Gastrocnemius medialis (tissue), 4 donors: ENCODE measurements at regions of chr16 and their contacts with region 1.

Region 1: DNA sequence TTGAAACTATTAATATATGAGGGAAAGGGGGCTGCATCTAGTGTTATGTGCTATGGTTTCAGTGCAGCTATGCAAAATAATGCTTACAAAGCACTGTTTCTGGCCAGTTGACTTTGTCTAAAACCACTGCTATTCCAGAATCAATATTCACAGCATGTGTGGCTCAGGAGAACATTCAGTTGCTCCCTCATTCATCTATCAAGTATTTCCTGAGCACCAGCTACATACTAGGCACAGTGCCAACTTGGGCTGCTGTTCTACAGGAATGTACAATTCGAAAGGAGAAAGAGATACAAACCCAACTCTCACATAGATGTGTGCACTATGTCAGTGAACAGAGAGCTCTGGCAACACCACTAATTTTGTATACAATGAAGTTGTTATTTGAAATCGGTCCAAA is 183.0 kb downstream of the PHKB start:
- DNase-seq: no peak
- ATAC-seq: no peak
- H3K4me3 ChIP-seq: no peak overlapping the region
- H3K27ac ChIP-seq: peak overlapping the region in 2 of 4 donors; percentile 20 to 42
- H3K4me1 ChIP-seq: peaks cover 13% of the 10 kb centered on the region in 2 donors
- H3K27me3 ChIP-seq: no peaks in the 10 kb centered on the region
- CTCF ChIP-seq: no peak
- POLR2A ChIP-seq: no peak

Region 2: DNA sequence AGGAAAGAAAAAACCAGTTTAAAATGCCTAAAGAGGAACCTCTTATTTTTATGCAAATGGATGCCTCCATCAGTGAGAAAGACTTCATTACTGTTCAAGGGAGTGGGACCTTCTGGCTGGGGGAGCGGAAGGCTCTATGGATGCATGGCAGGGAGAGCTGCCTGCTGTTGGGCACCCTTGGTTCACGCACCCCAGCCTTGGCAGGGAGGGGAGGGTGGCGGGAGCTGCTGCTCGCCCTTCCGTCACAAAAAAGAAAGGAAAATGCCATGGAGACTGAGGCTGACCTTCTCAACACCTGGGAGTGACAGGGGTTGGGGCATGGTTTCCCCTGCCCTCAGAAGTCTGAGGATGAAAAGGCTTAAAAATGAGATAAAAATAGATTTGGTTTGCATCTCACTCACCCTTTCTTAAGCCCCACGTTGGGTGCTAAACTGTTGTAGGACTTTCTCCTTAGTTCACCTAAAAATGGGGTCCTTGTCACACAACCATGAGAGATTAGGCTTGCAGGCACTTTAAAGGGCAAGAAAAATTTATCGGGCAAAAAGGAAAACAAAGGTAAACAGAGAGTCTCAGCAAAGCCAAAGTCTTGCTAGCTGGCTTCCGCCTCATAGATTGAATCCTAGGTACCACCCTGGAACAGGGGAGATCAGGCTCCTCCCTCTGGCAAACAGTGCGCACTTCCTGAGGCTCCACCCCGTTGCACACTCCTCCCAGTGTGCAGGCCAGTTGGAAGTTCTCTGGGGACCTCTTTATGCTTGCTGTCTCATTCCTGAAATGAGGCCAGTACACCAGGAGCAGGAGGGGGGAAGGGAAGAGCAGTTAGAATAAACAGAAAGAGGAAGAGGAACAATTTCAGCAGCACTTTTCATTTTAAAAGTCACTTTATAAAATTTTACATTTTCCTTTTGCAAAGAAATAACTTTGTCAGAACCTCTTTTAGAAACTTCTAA is 151.5 kb before region 1 on chr16:
- in situ Hi-C with region 1: no loop called
- intact Hi-C with region 1: loop called (anchors 10 kb)
- DNase-seq: peak; percentile 68 to 88
- ATAC-seq: peak; percentile 97 to 100
- H3K4me3 ChIP-seq: peak overlapping the region; percentile 6 to 28 (median 14)
- H3K27ac ChIP-seq: peak overlapping the region; percentile 70 to 83 (median 74)
- H3K4me1 ChIP-seq: peaks cover 25 to 33% of the 10 kb centered on the region in 2 donors
- H3K27me3 ChIP-seq: no peaks in the 10 kb centered on the region
- CTCF ChIP-seq: no peak
- POLR2A ChIP-seq: peak; percentile 27 to 41

Region 3: GRCh38 chr16:47753659-47754058 is 109.5 kb after region 1 on chr16:
- in situ Hi-C with region 1: no loop called
- intact Hi-C with region 1: no loop called
- DNase-seq: no peak
- ATAC-seq: no peak
- H3K4me3 ChIP-seq: no peak overlapping the region
- H3K27ac ChIP-seq: no peak overlapping the region
- H3K4me1 ChIP-seq: no peaks in the 10 kb centered on the region
- H3K27me3 ChIP-seq: no peaks in the 10 kb centered on the region
- CTCF ChIP-seq: no peak
- POLR2A ChIP-seq: no peak